ENCODE measurements at regions of chrX and their contacts with region 1.

Region 1: DNA sequence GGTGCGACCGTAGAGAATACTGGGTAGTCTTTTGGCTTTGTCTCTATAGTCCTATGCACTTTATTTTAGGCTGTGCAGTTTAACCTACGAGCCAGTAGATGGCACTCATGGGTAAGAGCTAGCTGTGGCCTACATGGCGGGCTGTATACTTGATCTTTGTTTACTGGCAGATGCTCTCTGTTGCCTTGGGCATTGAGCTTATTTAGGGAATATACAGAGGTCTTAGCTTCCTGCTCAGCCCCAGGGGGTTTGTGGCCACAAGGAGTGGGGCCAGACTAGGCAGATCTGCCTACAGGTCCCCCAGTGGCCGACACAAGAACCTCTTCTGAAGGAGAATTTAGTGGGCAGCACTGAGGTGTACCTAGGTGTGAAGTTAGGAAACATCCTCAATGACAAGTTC is 227.6 kb upstream of the HDX start:
- DNase-seq: no peak
- ATAC-seq: peak; percentile 78

Region 2: GRCh38 chrX:84907324-84907968 is 177.6 kb after region 1 on chrX:
- intact Hi-C with region 1: loop called (anchors 10 kb)
- DNase-seq: no peak
- ATAC-seq: no peak

Region 3: DNA sequence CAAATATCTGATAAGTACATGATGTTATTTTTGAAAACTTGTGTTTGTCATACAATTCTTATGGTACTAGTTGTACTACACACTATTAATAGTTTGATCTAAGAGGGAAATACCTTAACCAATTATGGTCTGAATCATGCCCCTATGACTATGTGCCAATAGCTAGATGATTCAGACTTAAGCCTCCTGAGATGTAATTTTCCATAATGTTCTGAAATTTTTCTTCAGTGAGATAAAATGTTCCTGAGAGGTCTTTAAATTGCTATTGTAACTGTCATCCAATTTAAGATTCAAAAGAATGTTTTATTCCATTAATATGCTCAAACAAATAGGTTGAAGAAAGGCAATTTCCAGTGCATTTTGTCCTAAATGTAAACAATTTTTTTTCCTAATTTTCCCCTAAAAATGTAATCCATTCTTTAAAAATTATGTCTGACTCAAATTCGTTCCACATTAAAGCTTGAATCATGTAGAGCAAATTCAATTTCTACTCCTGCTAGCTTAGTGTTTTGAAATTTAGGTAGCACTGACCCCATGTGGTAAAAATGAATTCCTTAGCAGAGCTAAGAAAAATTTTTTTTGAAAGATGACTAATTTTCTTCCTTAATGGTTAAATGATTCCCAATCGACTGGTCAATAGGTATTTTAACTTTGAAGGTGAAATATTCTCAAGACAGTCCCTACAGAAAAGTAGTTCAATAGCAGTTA is 323.0 kb after region 1 on chrX:
- intact Hi-C with region 1: loop called (anchors 10 kb)
- DNase-seq: no peak
- ATAC-seq: no peak

Region 4: GRCh38 chrX:85111347-85111746 is 381.5 kb after region 1 on chrX:
- intact Hi-C with region 1: no loop called
- DNase-seq: no peak
- ATAC-seq: no peak

Measured in left ventricle myocardium superior (tissue), 1 donor.